ENCODE measurements at regions of chr9 and their contacts with region 1.

Region 1: GRCh38 chr9:113591001-113591898 is 127.7 kb downstream of the RGS3 start:
- DNase-seq: peak; percentile 84
- H3K4me3 ChIP-seq: no peak overlapping the region
- H3K27ac ChIP-seq: no peak overlapping the region
- H3K4me1 ChIP-seq: peaks cover 16% of the 10 kb centered on the region
- H3K27me3 ChIP-seq: no peaks in the 10 kb centered on the region
- CTCF ChIP-seq: peak; percentile 93

Region 2: GRCh38 chr9:111916234-111916645 is 1675.0 kb before region 1 on chr9:
- CTCF ChIA-PET with region 1: no interaction called
- POLR2A ChIA-PET with region 1: no interaction called
- intact Hi-C with region 1: no loop called
- DNase-seq: no peak
- H3K4me3 ChIP-seq: no peak overlapping the region
- H3K27ac ChIP-seq: no peak overlapping the region
- H3K4me1 ChIP-seq: peaks cover 11% of the 10 kb centered on the region
- H3K27me3 ChIP-seq: no peaks in the 10 kb centered on the region
- CTCF ChIP-seq: no peak

Region 3: GRCh38 chr9:113275157-113276131 is 315.8 kb before region 1 on chr9 and contains the starts of genes CDC26 and PRPF4:
- CTCF ChIA-PET with region 1: interaction called, 4 read pairs
- POLR2A ChIA-PET with region 1: no interaction called
- intact Hi-C with region 1: loop called (anchors 10 kb)
- DNase-seq: peak; percentile 99
- H3K4me3 ChIP-seq: peak within 1 kb of the TSS; percentile 75
- H3K27ac ChIP-seq: peak within 1 kb of the TSS; percentile 95
- H3K4me1 ChIP-seq: peaks cover 16% of the 10 kb centered on the region
- H3K27me3 ChIP-seq: no peaks in the 10 kb centered on the region
- CTCF ChIP-seq: no peak
- total RNA-seq, gene CDC26: 17.9 and 25.4 TPM in 2 replicates
- total RNA-seq, gene PRPF4: 54.4 and 59.8 TPM in 2 replicates

Region 4: GRCh38 chr9:113446323-113446740 is 144.9 kb before region 1 on chr9:
- CTCF ChIA-PET with region 1: interaction called, 17 read pairs
- POLR2A ChIA-PET with region 1: no interaction called
- intact Hi-C with region 1: loop called (anchors 2 kb)
- DNase-seq: peak; percentile 65
- H3K4me3 ChIP-seq: no peak overlapping the region
- H3K27ac ChIP-seq: no peak overlapping the region
- H3K4me1 ChIP-seq: no peaks in the 10 kb centered on the region
- H3K27me3 ChIP-seq: no peaks in the 10 kb centered on the region
- CTCF ChIP-seq: peak; percentile 71

Region 5: DNA sequence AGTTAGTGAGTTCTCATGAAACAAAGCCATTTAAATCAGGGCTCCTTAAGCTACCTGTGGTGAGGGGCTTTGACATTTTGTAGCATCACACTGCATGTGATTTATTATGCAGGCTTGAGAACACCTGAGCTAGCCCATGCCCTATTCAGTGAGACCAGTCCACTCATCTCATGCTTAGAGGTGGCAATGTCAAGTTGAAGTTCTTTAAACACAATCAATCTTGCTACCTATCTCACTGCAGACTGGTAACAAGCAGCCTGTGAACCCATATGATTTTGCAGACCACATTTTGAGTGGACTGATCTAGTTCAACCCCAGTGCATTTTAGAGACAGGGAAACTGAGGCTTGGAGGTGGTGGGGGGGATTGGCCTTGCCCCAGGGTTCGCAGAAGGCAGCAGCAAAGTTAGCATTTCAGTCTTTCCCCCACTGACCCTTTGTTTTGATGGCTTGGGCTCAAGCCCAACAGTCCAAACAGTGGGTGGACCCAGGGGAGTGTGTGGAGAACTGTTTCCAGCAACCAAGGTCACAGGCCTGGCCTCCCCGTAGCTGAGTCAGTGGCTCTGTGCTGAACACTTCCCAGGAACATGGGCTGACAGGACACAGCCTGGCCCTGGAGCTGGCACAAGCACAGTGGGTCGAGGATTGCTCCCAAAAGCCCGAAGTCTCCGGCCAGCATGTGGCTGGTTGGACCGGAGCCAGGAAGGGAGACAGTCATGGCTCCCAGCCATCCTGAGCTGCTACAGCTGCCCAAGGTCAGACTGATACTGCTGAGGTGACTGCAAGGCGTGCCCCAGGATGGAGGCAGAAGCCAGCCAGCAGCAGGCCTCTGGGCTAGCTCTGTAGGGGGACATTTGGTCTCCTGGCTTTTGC is 32.4 kb before region 1 on chr9:
- CTCF ChIA-PET with region 1: no interaction called
- POLR2A ChIA-PET with region 1: no interaction called
- intact Hi-C with region 1: no loop called
- DNase-seq: no peak
- H3K4me3 ChIP-seq: no peak overlapping the region
- H3K27ac ChIP-seq: no peak overlapping the region
- H3K4me1 ChIP-seq: no peaks in the 10 kb centered on the region
- H3K27me3 ChIP-seq: no peaks in the 10 kb centered on the region
- CTCF ChIP-seq: no peak

Region 6: GRCh38 chr9:113657703-113658544 is 66.7 kb after region 1 on chr9:
- CTCF ChIA-PET with region 1: interaction called, 203 read pairs
- POLR2A ChIA-PET with region 1: interaction called, 3 read pairs
- intact Hi-C with region 1: loop called (anchors 1 kb)
- DNase-seq: peak; percentile 81
- H3K4me3 ChIP-seq: no peak overlapping the region
- H3K27ac ChIP-seq: no peak overlapping the region
- H3K4me1 ChIP-seq: peaks cover 4% of the 10 kb centered on the region
- H3K27me3 ChIP-seq: peaks cover 5% of the 10 kb centered on the region
- CTCF ChIP-seq: peak; percentile 93

Region 7: GRCh38 chr9:113932906-113933584 is 341.8 kb after region 1 on chr9:
- CTCF ChIA-PET with region 1: interaction called, 10 read pairs
- POLR2A ChIA-PET with region 1: no interaction called
- intact Hi-C with region 1: no loop called
- DNase-seq: no peak
- H3K4me3 ChIP-seq: no peak overlapping the region
- H3K27ac ChIP-seq: no peak overlapping the region
- H3K4me1 ChIP-seq: peaks cover 9% of the 10 kb centered on the region
- H3K27me3 ChIP-seq: no peaks in the 10 kb centered on the region
- CTCF ChIP-seq: no peak

Measured in A673 (cell line).